T-cell (primary cell): ENCODE measurements at regions of chr2 and their contacts with region 1.

Region 1: DNA sequence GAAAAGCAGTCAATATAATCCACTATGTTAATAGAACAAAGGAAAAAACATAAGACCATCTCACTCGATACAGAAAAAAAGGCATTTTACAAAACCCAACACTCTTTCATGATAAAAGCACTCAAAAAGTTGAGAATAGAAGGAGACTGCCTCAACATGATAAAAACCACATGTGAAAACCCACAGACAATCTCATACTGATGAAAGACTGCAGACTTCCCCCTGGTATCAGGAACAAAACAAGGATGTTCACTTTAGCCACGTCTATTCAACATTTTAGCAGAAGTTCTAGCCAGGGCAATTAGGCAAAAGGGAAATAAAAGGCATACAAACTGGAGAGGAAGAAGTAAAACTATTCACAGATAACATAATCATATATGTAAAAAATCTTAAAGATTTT is 285.9 kb downstream of the EIPR1 start:
- DNase-seq: no peak
- ATAC-seq: no peak
- H3K4me3 ChIP-seq: no peak overlapping the region
- H3K4me3 Mint-ChIP-seq: no peak overlapping the region
- H3K27ac ChIP-seq: no peak overlapping the region
- H3K27ac Mint-ChIP-seq: no peak overlapping the region
- H3K4me1 ChIP-seq: peaks cover 0 to 6% of the 10 kb centered on the region in 2 experiments
- H3K4me1 Mint-ChIP-seq: peaks cover 8 to 12% (median 11%) of the 10 kb centered on the region in 3 donors
- H3K27me3 ChIP-seq: peaks cover 0 to 8% of the 10 kb centered on the region in 2 experiments
- H3K27me3 Mint-ChIP-seq: peaks cover 6 to 11% of the 10 kb centered on the region in 2 donors

Region 2: GRCh38 chr2:3214827-3215404 is 123.2 kb after region 1 on chr2:
- CTCF ChIA-PET with region 1: no interaction called
- POLR2A ChIA-PET with region 1: no interaction called
- DNase-seq: no peak
- ATAC-seq: no peak
- H3K4me3 ChIP-seq: no peak overlapping the region
- H3K4me3 Mint-ChIP-seq: no peak overlapping the region
- H3K27ac ChIP-seq: no peak overlapping the region
- H3K27ac Mint-ChIP-seq: no peak overlapping the region
- H3K4me1 ChIP-seq: peaks cover 0 to 6% of the 10 kb centered on the region in 2 experiments
- H3K4me1 Mint-ChIP-seq: peaks cover 22 to 24% (median 24%) of the 10 kb centered on the region in 3 donors
- H3K27me3 ChIP-seq: no peaks in the 10 kb centered on the region
- H3K27me3 Mint-ChIP-seq: no peaks in the 10 kb centered on the region

Region 3: GRCh38 chr2:3316456-3317276 is 225.0 kb after region 1 on chr2:
- CTCF ChIA-PET with region 1: no interaction called
- POLR2A ChIA-PET with region 1: interaction called in 1 of 2 experiments, 12 read pairs
- DNase-seq: no peak
- ATAC-seq: no peak
- H3K4me3 ChIP-seq: no peak overlapping the region
- H3K4me3 Mint-ChIP-seq: no peak overlapping the region
- H3K27ac ChIP-seq: no peak overlapping the region
- H3K27ac Mint-ChIP-seq: peak overlapping the region in 1 of 2 donors; percentile 5
- H3K4me1 ChIP-seq: peaks cover 0 to 15% of the 10 kb centered on the region in 2 experiments
- H3K4me1 Mint-ChIP-seq: peaks cover 16 to 25% (median 20%) of the 10 kb centered on the region in 3 donors
- H3K27me3 ChIP-seq: no peaks in the 10 kb centered on the region
- H3K27me3 Mint-ChIP-seq: no peaks in the 10 kb centered on the region

Region 4: GRCh38 chr2:3379647-3380534 is 288.2 kb after region 1 on chr2 and contains the start of gene TRAPPC12:
- CTCF ChIA-PET with region 1: no interaction called
- POLR2A ChIA-PET with region 1: no interaction called
- DNase-seq: peak; percentile 87 to 94 (median 91)
- ATAC-seq: peak; percentile 80 to 86 (median 81)
- H3K4me3 ChIP-seq: peak within 1 kb of the TSS; percentile 92 to 99
- H3K4me3 Mint-ChIP-seq: peak within 1 kb of the TSS; percentile 88 to 98 (median 98)
- H3K27ac ChIP-seq: peak within 1 kb of the TSS; percentile 97
- H3K27ac Mint-ChIP-seq: peak within 1 kb of the TSS; percentile 95 to 98
- H3K4me1 ChIP-seq: peaks cover 17 to 41% of the 10 kb centered on the region in 2 experiments
- H3K4me1 Mint-ChIP-seq: peaks cover 49 to 67% (median 63%) of the 10 kb centered on the region in 3 donors
- H3K27me3 ChIP-seq: no peaks in the 10 kb centered on the region
- H3K27me3 Mint-ChIP-seq: no peaks in the 10 kb centered on the region
- total RNA-seq, gene TRAPPC12: 103 to 158 (median 152) TPM